ENCODE measurements at regions of chr12 and their contacts with region 1.

Region 1: DNA sequence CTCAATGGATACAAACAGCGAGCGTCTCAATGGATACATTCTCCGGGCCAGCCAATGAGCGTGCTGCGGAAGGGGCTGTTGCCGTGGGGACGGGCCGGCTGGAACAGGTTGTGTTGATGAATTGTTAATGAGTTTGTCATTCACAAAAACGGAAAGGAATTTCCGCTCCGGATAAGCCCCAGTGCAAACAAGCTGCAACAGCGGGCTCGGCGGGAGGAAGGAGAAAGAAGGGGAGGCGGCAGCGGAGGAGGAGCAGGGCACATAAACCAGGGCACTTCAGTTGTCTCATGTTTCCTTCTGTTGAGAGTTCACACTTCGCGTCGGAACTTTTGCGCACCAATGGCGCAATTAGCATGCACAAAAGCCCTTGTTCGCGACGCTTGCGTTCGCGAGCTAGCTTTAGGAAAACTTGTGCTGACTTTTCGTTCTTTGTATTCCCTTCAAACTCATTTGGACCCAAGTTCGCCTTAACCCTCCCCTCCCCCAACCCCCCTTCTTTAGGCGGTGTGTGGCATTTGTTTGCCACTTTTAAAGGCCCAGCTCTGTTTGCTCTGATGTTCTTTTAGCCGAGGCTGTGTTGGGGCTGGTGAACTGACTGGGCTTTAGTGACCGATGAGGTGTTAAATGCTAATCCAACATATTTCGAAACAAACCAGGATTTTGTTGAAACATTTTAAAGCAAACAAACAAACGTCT is at the start of gene DUSP6:
- DNase-seq: peak; percentile 81 to 89
- H3K4me3 ChIP-seq: peak within 1 kb of the TSS; percentile 44 to 79
- H3K27ac ChIP-seq: peak within 1 kb of the TSS; percentile 93 to 96
- H3K4me1 ChIP-seq: no peaks in the 10 kb centered on the region
- H3K27me3 ChIP-seq: no peaks in the 10 kb centered on the region
- CTCF ChIP-seq: no peak
- POLR2A ChIP-seq: peak; percentile 55 to 90
- total RNA-seq, gene DUSP6: 28.7 to 103 (median 77.6) TPM

Region 2: GRCh38 chr12:89151536-89151935 is 201.1 kb before region 1 on chr12:
- intact Hi-C with region 1: no loop called
- DNase-seq: no peak
- H3K4me3 ChIP-seq: no peak overlapping the region
- H3K27ac ChIP-seq: no peak overlapping the region
- H3K4me1 ChIP-seq: no peaks in the 10 kb centered on the region
- H3K27me3 ChIP-seq: no peaks in the 10 kb centered on the region
- CTCF ChIP-seq: no peak
- POLR2A ChIP-seq: no peak

Region 3: DNA sequence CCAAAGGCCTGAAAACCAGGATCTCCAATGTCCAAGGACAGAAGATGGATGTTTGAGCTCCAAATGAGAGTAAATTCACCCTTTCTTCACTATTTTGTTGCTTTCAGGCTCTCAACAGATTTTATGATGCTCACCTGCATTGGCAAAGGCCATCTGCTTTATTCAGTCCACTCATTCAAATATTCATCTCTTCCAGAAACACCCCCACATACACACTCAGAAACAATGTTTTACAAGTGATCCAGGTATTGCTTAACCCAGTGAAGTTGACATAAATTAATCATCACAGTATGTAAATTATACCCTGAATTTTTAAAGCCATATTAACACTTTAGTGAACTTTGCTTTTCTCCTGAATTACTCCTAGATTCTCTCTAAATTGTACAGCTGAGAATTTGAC is 63.7 kb before region 1 on chr12:
- intact Hi-C with region 1: no loop called
- DNase-seq: no peak
- H3K4me3 ChIP-seq: no peak overlapping the region
- H3K27ac ChIP-seq: no peak overlapping the region
- H3K4me1 ChIP-seq: no peaks in the 10 kb centered on the region
- H3K27me3 ChIP-seq: no peaks in the 10 kb centered on the region
- CTCF ChIP-seq: no peak
- POLR2A ChIP-seq: no peak

Region 4: DNA sequence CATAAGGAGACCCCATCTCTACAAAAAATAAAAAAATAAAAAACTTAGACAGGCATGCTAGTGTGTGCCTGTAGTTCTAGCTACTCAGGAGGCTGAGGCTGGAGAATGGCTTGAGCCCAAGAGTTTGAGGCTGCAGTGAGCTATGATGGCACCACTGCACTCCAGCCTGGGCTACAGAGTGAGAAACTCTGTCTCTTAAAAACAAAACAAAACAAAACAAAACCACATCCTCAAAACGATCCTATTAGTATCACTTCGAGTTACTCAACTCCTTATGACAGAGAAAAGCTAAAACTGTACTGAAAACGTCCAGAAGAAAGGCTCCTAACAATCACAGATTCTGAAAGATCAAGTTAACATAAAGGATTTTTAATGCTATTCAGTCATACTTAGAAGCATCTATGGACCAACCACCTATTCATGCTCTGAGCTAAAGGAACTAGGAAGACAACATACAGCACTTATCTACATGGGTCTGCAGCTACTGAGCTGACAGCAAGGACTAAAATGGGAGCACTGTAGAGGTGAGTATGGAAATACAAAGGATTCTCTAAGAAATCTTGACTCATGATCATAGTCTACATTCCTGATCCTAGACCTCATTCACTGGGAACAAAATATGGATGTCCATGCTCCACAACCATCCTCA is 75.0 kb after region 1 on chr12:
- intact Hi-C with region 1: no loop called
- DNase-seq: no peak
- H3K4me3 ChIP-seq: no peak overlapping the region
- H3K27ac ChIP-seq: no peak overlapping the region
- H3K4me1 ChIP-seq: no peaks in the 10 kb centered on the region
- H3K27me3 ChIP-seq: no peaks in the 10 kb centered on the region
- CTCF ChIP-seq: no peak
- POLR2A ChIP-seq: no peak

Region 5: GRCh38 chr12:89451841-89452251 is 99.2 kb after region 1 on chr12:
- intact Hi-C with region 1: loop called (anchors 10 kb)
- DNase-seq: peak; percentile 21 to 29
- H3K4me3 ChIP-seq: no peak overlapping the region
- H3K27ac ChIP-seq: peak overlapping the region; percentile 27 to 62
- H3K4me1 ChIP-seq: peaks cover 3 to 6% of the 10 kb centered on the region in 2 donors
- H3K27me3 ChIP-seq: no peaks in the 10 kb centered on the region
- CTCF ChIP-seq: no peak
- POLR2A ChIP-seq: no peak

Region 6: DNA sequence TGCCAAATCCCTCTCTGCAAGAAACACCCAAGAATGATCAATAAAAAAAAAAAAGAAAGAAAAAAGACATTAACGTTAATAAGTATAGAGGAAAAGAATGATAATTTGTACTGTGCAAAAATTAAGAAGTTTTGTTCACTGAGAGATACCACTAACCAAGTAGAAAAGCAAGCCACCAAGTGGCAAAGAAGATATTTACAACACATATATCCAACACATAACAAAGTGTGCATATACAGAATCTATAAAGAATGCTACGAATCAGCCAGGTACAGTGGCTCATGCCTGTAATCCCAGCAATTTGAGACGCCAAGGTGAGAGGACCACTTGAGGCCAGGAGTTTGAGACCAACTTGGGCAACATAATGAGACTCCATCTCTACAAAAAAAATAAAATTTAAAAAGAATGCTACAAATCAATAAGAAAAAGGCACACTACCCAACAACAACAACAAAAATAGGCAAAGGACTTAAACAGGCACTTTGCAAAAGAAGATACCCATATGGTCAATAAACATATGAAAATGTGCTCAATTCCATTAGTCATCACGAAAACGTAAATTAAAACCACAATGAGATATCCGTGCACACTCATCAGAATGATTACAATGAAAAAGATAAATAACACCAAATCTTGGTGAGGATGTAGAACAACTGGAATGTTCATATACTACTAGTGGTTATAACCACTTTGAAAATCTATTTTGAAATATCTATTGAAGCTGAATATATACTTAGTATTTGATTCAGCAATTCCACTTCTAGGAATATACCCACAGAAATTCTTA is 152.1 kb after region 1 on chr12:
- intact Hi-C with region 1: no loop called
- DNase-seq: no peak
- H3K4me3 ChIP-seq: no peak overlapping the region
- H3K27ac ChIP-seq: no peak overlapping the region
- H3K4me1 ChIP-seq: no peaks in the 10 kb centered on the region
- H3K27me3 ChIP-seq: no peaks in the 10 kb centered on the region
- CTCF ChIP-seq: no peak
- POLR2A ChIP-seq: no peak

Measured in uterus (tissue), 4 donors.